ENCODE measurements at regions of chr15 and their contacts with region 1.

Region 1: DNA sequence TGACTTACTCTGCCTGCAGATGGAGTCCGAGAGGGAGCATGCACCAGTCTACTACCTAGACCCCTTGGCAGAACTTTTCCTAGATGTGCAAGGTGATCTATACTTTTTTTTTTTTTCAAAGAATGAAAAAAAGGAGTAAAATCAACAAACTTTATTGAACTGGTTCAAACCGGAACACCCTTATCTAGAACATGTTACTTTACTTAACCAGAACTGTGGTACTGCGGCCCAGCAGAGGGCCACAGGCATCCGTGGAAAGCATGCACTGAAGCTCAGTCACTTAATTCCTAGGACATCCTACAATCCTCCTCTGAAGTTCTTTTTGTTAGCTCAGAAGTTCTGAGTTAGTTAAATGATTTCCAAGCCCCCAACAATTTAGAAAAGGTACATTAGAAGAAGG is 21.6 kb downstream of the CHAC1 start:
- DNase-seq: no peak
- H3K4me3 ChIP-seq: no peak overlapping the region
- H3K27ac ChIP-seq: no peak overlapping the region
- H3K27me3 ChIP-seq: no peaks in the 10 kb centered on the region
- CTCF ChIP-seq: no peak

Region 2: GRCh38 chr15:40928821-40929659 is 45.8 kb before region 1 on chr15 and contains the start of gene DLL4:
- CTCF ChIA-PET with region 1: no interaction called
- POLR2A ChIA-PET with region 1: no interaction called
- DNase-seq: peak; percentile 24
- H3K4me3 ChIP-seq: peak within 1 kb of the TSS; percentile 63
- H3K27ac ChIP-seq: no peak within 1 kb of the TSS
- H3K27me3 ChIP-seq: peaks cover 42% of the 10 kb centered on the region
- CTCF ChIP-seq: no peak
- polyA plus RNA-seq, gene DLL4: 1.5 and 2.6 TPM in 2 replicates

Region 3: GRCh38 chr15:40999190-40999589 is 24.3 kb after region 1 on chr15:
- CTCF ChIA-PET with region 1: no interaction called
- POLR2A ChIA-PET with region 1: interaction called, 19 read pairs
- DNase-seq: peak; percentile 81
- H3K4me3 ChIP-seq: no peak overlapping the region
- H3K27ac ChIP-seq: no peak overlapping the region
- H3K27me3 ChIP-seq: no peaks in the 10 kb centered on the region
- CTCF ChIP-seq: no peak

Measured in AG04450 (cell line).